ENCODE measurements at regions of chr14 and their contacts with region 1.

Region 1: GRCh38 chr14:43735924-43736323 is 771.2 kb downstream of the FSCB start:
- DNase-seq: no peak
- H3K4me3 ChIP-seq: no peak overlapping the region
- H3K27ac ChIP-seq: no peak overlapping the region
- H3K27me3 ChIP-seq: no peaks in the 10 kb centered on the region
- CTCF ChIP-seq: no peak

Region 2: GRCh38 chr14:43855556-43855955 is 119.6 kb after region 1 on chr14:
- CTCF ChIA-PET with region 1: no interaction called
- POLR2A ChIA-PET with region 1: no interaction called
- DNase-seq: no peak
- H3K4me3 ChIP-seq: no peak overlapping the region
- H3K27ac ChIP-seq: no peak overlapping the region
- H3K27me3 ChIP-seq: no peaks in the 10 kb centered on the region
- CTCF ChIP-seq: no peak

Region 3: DNA sequence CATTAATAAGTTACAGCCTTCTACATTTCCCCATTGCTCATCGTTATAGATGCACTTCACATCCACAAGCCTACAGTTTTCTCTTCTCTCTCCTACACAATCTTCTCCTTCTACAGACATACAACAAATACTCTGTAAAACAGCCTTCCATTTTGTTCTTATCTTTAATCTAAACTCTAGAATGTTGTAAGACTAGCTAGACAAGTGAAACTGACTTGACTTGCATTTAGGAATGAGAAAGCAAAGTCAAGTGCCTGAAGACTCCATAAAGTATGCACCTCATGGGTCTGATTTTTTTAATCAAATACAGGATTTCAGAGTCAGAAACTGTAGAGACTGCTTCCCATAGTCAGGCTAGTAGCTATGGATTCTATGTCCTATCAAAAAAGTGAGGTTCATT is 1035.6 kb after region 1 on chr14:
- CTCF ChIA-PET with region 1: interaction called, 15 read pairs
- POLR2A ChIA-PET with region 1: no interaction called
- DNase-seq: no peak
- H3K4me3 ChIP-seq: no peak overlapping the region
- H3K27ac ChIP-seq: no peak overlapping the region
- H3K27me3 ChIP-seq: no peaks in the 10 kb centered on the region
- CTCF ChIP-seq: no peak